HAP-1 (cell line): ENCODE measurements at regions of chr21 and their contacts with region 1.

Region 1: DNA sequence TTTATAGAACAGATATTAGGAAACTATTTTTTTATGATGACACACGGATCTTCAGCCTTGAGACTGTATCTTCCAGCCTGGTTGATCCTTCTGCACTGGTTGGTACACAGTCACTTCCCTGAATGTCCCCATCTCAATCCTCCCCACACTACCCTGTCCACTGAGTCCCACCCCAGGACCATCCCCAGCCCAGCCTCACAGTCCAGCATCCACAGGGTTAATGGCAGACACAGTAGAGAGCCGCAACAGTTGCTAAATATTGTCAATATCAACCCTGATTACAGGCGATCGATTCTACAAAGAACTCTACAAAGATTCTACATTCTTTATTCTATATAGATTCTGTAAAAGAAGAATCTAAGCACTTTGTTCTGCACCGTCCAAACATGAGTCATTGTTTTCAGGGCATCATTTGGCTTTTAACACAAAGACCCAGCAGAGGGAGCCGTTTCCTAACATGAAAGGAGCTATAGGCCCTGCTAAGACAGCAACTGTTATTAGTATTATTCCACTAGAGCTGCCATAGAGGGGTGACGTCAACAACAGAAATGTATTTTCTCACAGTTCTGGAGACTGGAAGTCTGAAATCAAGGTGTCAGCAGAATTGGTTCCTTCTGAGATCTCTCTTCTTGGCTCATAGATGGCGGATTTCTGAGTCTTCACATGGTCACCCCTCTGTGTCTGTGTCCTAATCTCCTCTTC is 30.1 kb upstream of the IFNAR2 start:
- DNase-seq: peak; percentile 74 to 82
- H3K4me3 ChIP-seq: no peak overlapping the region
- H3K4me1 ChIP-seq: peaks cover 6% of the 10 kb centered on the region
- H3K27me3 ChIP-seq: no peaks in the 10 kb centered on the region; the same call in 1 of the 2 replicates

Region 2: GRCh38 chr21:32653311-32653901 is 546.3 kb before region 1 on chr21:
- in situ Hi-C with region 1: loop called (anchors 25 kb)
- DNase-seq: peak; percentile 23 to 40
- H3K4me3 ChIP-seq: no peak overlapping the region
- H3K4me1 ChIP-seq: no peaks in the 10 kb centered on the region
- H3K27me3 ChIP-seq: no peaks in the 10 kb centered on the region

Region 3: GRCh38 chr21:32834916-32835235 is 364.8 kb before region 1 on chr21:
- in situ Hi-C with region 1: loop called (anchors 5 kb)
- DNase-seq: peak; percentile 40 to 67
- H3K4me3 ChIP-seq: no peak overlapping the region
- H3K4me1 ChIP-seq: peaks cover 4% of the 10 kb centered on the region; the same call in 1 of the 2 replicates
- H3K27me3 ChIP-seq: no peaks in the 10 kb centered on the region

Region 4: DNA sequence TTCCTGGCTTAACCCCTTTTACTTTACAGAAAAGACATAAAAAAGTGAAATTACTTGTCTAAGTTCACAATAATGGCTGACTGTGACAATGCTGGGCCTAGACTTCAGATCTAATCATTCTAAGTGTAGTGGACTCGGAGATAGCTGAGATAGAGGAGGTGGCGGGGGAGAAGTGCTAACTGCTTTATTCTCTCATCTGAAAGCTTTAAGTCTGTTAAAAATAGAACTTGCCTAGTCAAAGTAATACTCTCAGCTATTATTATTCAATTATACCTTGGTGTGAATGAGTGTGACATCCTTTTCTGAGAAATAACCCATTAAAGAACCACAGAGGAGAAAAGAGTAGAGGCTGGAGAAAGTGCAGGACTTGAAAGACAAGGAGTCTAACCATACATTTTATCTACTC is 270.0 kb before region 1 on chr21:
- in situ Hi-C with region 1: loop called (anchors 10 kb)
- DNase-seq: no peak
- H3K4me3 ChIP-seq: no peak overlapping the region
- H3K4me1 ChIP-seq: peaks cover 10% of the 10 kb centered on the region
- H3K27me3 ChIP-seq: no peaks in the 10 kb centered on the region

Region 5: DNA sequence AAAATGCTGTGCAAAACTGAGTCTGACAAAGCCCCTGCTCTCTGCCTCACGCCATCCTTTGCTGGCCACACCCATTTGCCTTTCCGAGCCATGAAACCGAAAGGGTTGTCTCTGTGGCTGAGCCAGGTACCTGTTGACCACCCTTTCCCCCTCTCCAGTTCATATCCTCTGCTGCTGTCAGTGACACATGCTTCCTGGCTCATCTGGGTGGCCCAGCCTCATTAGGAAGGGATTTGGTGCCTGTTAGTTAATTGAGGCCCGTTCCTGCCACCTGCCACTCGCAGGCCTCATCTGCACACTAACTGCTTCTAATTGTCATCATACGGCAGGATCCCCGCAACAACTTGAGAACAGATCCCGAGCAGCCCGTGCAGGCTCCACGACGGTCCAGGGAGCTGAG is 50.5 kb before region 1 on chr21:
- in situ Hi-C with region 1: loop called (anchors 10 kb)
- DNase-seq: no peak
- H3K4me3 ChIP-seq: no peak overlapping the region
- H3K4me1 ChIP-seq: no peaks in the 10 kb centered on the region
- H3K27me3 ChIP-seq: 0 out of 2 replicates have a peak, but pooled peaks cover 3% of the 10 kb centered on the region

Region 6: DNA sequence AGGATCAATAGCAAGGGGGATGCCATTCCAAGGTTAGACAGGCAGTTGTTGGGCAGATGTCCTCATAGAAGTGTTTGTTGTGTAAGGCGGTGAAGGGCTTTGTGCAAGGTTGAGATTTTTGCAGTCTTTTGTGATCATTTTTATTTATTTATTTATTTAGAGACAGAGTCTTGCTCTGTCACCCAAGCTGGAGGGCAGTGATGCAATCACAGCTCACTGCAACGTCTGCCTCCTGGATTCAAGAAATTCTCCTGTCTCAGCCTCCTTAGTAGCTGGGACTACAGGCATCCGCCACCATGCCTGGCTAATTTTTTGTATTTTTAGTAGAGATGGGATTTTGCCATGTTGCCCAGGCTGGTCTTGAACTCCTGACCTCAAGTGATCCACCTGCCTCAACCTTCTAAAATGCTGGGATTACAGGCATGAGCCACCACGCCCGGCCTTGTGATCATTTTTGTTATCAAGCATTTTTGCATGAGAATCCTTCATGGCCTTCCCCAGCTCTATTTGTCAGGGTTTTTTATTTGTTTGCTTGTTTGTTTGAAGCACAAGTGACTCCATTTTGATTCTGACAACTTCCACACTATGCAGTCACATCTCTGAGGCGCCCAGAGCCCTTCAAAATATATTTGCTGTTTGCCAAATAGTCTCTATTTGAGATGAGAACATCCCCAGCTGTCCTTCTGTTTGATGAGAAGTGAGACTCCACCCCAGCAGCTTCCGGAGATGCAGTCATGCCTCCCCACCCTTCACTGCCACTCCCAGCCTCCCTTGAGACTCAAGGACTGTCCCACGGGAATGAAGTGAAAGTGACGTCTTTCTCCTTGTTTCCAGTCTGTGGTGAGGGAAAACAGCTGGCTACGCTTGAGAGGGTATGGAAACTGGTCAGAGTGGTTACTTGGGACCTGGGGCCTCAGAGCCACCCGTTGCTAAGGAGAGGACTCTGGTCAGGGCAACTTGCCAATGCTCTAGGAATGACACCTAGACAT is 242.1 kb after region 1 on chr21:
- in situ Hi-C with region 1: loop called (anchors 5 kb)
- DNase-seq: peak in 1 of 2 experiments; percentile 29
- H3K4me3 ChIP-seq: no peak overlapping the region
- H3K4me1 ChIP-seq: no peaks in the 10 kb centered on the region
- H3K27me3 ChIP-seq: no peaks in the 10 kb centered on the region